ENCODE measurements at regions of chr11 and their contacts with region 1.

Region 1: GRCh38 chr11:88357323-88358039 is 19.9 kb upstream of the CTSC start:
- DNase-seq: peak; percentile 57
- H3K4me3 Mint-ChIP-seq: peak overlapping the region; percentile 3
- H3K27ac Mint-ChIP-seq: peak overlapping the region; percentile 63
- H3K4me1 Mint-ChIP-seq: peaks cover 6% of the 10 kb centered on the region
- H3K27me3 Mint-ChIP-seq: no peaks in the 10 kb centered on the region
- CTCF ChIP-seq: no peak

Region 2: DNA sequence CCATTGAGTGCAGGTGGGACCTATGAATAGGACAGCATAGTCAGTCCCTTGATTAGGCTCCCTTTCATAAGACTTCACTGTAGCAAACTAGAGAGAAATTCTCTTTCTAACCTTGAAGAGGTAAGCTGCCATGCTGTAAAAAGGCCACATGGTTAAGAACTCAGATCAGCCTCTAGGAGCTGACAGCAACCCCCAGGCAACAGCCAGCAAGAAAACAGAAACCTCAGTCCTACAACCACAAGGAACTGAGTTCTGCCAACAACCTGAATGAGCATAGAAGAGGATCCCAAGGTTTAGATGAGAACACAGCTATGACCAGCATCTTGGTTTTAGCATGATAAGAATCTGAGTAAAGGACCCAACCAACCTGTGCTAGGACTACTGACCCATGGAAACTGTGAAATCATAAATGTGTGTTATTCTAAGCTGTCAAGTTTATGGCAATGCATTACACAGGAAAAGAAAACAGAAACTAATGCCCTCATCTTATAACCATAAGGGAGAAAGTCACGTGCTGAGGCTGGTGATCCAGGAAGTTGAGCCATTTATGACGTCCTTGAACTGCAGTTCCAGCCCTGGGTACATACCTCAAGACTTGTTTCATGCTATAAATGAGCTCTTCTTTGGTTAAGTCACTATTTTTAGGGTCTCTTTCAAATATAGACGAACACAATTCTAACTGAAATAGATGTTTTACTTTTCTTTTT is 225.6 kb before region 1 on chr11:
- CTCF ChIA-PET with region 1: no interaction called
- POLR2A ChIA-PET with region 1: no interaction called
- intact Hi-C with region 1: no loop called
- DNase-seq: no peak
- H3K4me3 Mint-ChIP-seq: no peak overlapping the region
- H3K27ac Mint-ChIP-seq: no peak overlapping the region
- H3K4me1 Mint-ChIP-seq: peaks cover 9% of the 10 kb centered on the region
- H3K27me3 Mint-ChIP-seq: no peaks in the 10 kb centered on the region
- CTCF ChIP-seq: no peak

Region 3: GRCh38 chr11:88292171-88292843 is 65.2 kb before region 1 on chr11:
- CTCF ChIA-PET with region 1: no interaction called
- POLR2A ChIA-PET with region 1: no interaction called
- intact Hi-C with region 1: no loop called
- DNase-seq: peak; percentile 83
- H3K4me3 Mint-ChIP-seq: no peak overlapping the region
- H3K27ac Mint-ChIP-seq: no peak overlapping the region
- H3K4me1 Mint-ChIP-seq: peaks cover 5% of the 10 kb centered on the region
- H3K27me3 Mint-ChIP-seq: no peaks in the 10 kb centered on the region
- CTCF ChIP-seq: peak; percentile 16

Region 4: GRCh38 chr11:88345408-88345807 is 12.1 kb before region 1 on chr11:
- CTCF ChIA-PET with region 1: interaction called, 3 read pairs
- POLR2A ChIA-PET with region 1: interaction called, 10 read pairs
- intact Hi-C with region 1: no loop called
- DNase-seq: peak; percentile 27
- H3K4me3 Mint-ChIP-seq: no peak overlapping the region
- H3K27ac Mint-ChIP-seq: peak overlapping the region; percentile 51
- H3K4me1 Mint-ChIP-seq: peaks cover 20% of the 10 kb centered on the region
- H3K27me3 Mint-ChIP-seq: no peaks in the 10 kb centered on the region
- CTCF ChIP-seq: no peak

Measured in MCF 10A (cell line).